MCF 10A (cell line): ENCODE measurements at regions of chr9 and their contacts with region 1.

Region 1: DNA sequence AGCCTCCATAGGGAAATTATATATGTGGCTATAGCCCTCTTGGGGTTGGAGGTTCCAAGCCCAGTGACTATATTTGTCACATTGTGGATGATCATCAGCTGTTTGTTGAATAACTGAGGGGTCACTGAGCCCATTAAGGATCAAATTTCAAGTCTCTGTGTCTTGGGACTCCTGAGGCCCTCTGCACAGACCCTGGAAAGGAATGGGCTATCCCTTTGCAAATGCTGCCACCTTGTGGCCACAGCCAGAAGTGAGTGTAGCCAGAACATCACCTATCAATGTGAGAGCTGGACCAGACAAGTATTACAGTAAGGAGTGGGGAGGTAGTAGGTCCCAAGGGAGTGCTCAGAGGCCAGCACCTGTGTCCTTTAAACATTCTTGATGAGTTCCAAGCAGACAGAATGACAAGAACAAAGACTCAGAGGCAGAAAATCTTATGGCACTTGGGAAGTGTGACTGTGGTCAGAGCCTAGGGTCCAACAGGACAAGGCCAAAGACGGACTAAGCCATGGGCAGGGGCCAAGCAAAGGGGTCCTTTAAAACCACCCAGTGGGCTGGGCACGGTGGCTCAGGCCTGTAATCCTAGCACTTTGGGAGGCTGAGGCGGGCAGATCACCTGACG is 8.2 kb downstream of the RPP25L start:
- DNase-seq: peak; percentile 82
- H3K4me3 Mint-ChIP-seq: no peak overlapping the region
- H3K27ac Mint-ChIP-seq: no peak overlapping the region
- H3K4me1 Mint-ChIP-seq: peaks cover 9% of the 10 kb centered on the region
- H3K27me3 Mint-ChIP-seq: no peaks in the 10 kb centered on the region
- CTCF ChIP-seq: peak; percentile 77

Region 2: GRCh38 chr9:34222451-34222850 is 381.3 kb before region 1 on chr9:
- CTCF ChIA-PET with region 1: no interaction called
- POLR2A ChIA-PET with region 1: no interaction called
- intact Hi-C with region 1: no loop called
- DNase-seq: no peak
- H3K4me3 Mint-ChIP-seq: no peak overlapping the region
- H3K27ac Mint-ChIP-seq: peak overlapping the region; percentile 61
- H3K4me1 Mint-ChIP-seq: peaks cover 13% of the 10 kb centered on the region
- H3K27me3 Mint-ChIP-seq: no peaks in the 10 kb centered on the region
- CTCF ChIP-seq: no peak

Region 3: GRCh38 chr9:34334337-34334824 is 269.3 kb before region 1 on chr9:
- CTCF ChIA-PET with region 1: interaction called, 12 read pairs
- POLR2A ChIA-PET with region 1: interaction called, 3 read pairs
- intact Hi-C with region 1: no loop called
- DNase-seq: no peak
- H3K4me3 Mint-ChIP-seq: no peak overlapping the region
- H3K27ac Mint-ChIP-seq: no peak overlapping the region
- H3K4me1 Mint-ChIP-seq: peaks cover 19% of the 10 kb centered on the region
- H3K27me3 Mint-ChIP-seq: no peaks in the 10 kb centered on the region
- CTCF ChIP-seq: no peak

Region 4: DNA sequence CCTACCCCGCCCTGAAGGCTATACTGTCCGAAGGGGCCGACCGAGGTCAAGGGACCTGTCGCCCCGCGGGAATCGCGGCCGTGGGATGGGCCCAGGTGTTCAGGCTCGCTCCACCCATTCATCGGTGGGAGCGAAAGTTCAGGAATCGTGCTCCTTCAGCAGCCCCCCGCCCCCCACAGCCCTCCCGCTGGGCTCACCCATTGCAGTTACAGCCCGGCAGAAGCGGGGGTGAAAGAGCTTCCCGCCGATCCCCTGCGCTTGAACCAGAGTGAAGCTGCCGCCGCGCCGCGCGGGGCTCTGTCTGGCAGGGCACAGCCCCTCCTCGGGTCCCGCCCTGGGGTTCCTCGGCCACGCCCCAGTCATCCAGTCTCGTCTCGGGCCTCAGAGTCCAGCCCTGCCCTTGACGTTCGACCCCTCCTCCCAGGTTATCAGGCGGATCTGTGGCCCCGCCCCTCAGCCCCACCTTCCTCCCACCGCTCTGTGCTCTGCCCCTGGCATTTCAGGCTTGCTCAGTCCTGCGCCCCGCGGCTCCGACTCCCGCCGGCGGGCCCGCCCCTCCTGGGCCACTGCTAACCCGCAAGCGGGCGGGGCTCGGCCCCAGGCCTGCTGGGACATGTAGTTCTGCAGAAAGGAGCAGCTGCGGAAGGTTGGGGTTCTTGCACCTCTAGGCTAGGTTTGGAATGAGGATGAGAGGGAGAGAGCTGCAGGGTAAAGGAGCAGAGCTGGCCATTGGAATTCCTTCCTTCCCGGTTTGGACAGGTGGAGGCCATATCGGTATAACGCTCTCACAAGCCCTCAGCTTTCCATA is 226.9 kb before region 1 on chr9 and contains the start of gene MYORG:
- CTCF ChIA-PET with region 1: interaction called, 13 read pairs
- POLR2A ChIA-PET with region 1: no interaction called
- intact Hi-C with region 1: no loop called
- DNase-seq: peak; percentile 98
- H3K4me3 Mint-ChIP-seq: peak within 1 kb of the TSS; percentile 72
- H3K27ac Mint-ChIP-seq: peak within 1 kb of the TSS; percentile 68
- H3K4me1 Mint-ChIP-seq: peaks cover 35% of the 10 kb centered on the region
- H3K27me3 Mint-ChIP-seq: no peaks in the 10 kb centered on the region
- CTCF ChIP-seq: no peak
- total RNA-seq, gene MYORG: 2.4 and 2.9 TPM in 2 replicates

Region 5: DNA sequence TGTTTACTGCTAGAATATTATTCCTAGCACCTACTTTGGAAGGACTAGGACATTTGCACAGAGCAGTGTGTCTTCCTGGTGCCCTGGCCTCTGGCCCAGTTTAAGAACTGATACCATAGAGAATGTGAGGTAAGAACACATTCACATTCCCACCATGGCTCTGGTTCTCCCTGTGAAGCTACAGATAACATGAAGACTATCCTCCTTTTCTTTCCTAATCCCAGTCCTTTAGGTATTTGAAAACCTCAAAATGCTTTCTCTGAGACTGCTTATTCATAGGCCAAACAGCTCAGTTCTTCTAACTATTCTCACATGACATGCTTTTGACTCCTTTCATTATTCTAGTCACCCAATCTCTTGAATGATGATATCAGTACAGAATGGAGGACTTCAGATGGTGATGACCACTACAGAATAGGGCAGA is 157.2 kb before region 1 on chr9:
- CTCF ChIA-PET with region 1: interaction called, 10 read pairs
- POLR2A ChIA-PET with region 1: no interaction called
- intact Hi-C with region 1: no loop called
- DNase-seq: no peak
- H3K4me3 Mint-ChIP-seq: no peak overlapping the region
- H3K27ac Mint-ChIP-seq: no peak overlapping the region
- H3K4me1 Mint-ChIP-seq: no peaks in the 10 kb centered on the region
- H3K27me3 Mint-ChIP-seq: no peaks in the 10 kb centered on the region
- CTCF ChIP-seq: no peak

Region 6: GRCh38 chr9:34546834-34547827 is 56.6 kb before region 1 on chr9:
- CTCF ChIA-PET with region 1: interaction called, 16 read pairs
- POLR2A ChIA-PET with region 1: interaction called, 3 read pairs
- intact Hi-C with region 1: loop called (anchors 1 kb)
- DNase-seq: peak; percentile 58
- H3K4me3 Mint-ChIP-seq: no peak overlapping the region
- H3K27ac Mint-ChIP-seq: no peak overlapping the region
- H3K4me1 Mint-ChIP-seq: no peaks in the 10 kb centered on the region
- H3K27me3 Mint-ChIP-seq: peaks cover 16% of the 10 kb centered on the region
- CTCF ChIP-seq: peak; percentile 67

Region 7: DNA sequence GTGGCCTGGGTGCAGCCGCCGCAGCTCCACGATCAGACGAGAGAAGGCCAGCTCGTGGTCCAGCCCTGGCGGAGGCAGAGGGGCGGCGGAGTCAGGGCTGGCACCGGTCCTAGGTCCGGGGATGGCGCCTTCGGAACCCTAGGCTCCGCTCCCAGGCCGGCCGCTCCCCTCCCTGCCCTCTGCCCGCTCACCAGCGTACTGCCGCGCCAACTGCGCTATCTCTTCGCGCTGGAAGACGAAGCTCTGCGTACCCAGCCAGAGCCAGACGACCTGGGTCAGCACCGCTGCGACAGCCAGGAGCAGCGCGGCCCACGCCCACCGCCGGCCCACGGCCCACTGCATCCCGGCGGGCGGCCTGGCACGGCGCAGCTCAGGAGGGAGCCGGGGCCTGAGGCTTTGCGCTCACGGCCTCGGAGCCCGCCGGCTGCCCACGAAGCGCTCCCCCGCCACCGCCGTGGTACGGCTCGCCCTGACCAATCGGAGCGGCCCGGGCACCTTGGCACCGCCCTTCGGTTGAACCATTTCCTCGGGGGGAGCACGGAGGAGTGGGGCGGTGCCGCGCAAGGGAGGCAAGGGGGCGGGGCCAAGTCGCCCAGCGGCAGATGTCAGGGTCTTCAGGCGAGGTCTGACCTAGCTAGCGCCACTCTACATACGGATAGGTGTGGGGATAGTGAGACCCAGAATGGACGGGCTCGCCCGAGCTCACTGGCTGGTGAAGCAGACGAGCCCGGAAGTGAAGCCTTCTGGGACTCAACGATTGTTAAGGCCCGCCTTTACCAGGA is 33.8 kb after region 1 on chr9 and contains the start of gene SIGMAR1:
- CTCF ChIA-PET with region 1: interaction called, 17 read pairs
- POLR2A ChIA-PET with region 1: interaction called, 3 read pairs
- intact Hi-C with region 1: no loop called
- DNase-seq: peak; percentile 93
- H3K4me3 Mint-ChIP-seq: peak within 1 kb of the TSS; percentile 92
- H3K27ac Mint-ChIP-seq: peak within 1 kb of the TSS; percentile 97
- H3K4me1 Mint-ChIP-seq: peaks cover 31% of the 10 kb centered on the region
- H3K27me3 Mint-ChIP-seq: no peaks in the 10 kb centered on the region
- CTCF ChIP-seq: no peak
- total RNA-seq, gene SIGMAR1: 82.1 and 99.8 TPM in 2 replicates

Region 8: DNA sequence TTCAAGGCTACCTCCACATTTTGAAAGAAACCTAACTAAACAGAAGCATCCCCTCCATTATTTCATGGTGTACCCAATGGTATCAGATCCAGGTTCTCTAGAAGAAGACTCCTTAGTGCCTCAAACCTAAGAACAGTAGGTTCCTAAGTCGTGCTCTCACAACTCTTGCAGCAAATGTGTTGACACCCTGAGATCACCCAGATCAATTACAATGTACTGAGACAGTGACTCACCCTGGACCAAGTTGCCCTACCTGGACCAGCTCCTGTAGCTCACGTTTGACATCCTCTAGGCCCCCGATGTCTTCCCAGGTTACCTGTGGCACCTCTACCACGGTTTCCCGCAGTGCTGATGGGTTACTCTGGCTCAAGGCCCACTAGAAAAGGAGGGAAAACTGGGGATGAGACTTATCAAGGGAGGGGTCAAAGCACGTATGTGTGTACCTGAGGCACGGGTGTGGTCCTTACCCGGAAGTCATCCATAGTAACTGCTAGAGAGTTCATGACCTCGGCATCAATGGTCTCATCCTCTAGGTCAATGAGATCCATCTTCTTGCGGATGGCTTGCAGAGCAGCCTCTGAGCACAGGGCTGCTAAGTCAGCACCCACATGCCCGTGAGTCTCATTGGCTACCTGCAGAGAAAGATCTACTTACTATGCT is 457.0 kb after region 1 on chr9:
- CTCF ChIA-PET with region 1: no interaction called
- POLR2A ChIA-PET with region 1: no interaction called
- intact Hi-C with region 1: no loop called
- DNase-seq: no peak
- H3K4me3 Mint-ChIP-seq: no peak overlapping the region
- H3K27ac Mint-ChIP-seq: no peak overlapping the region
- H3K4me1 Mint-ChIP-seq: no peaks in the 10 kb centered on the region
- H3K27me3 Mint-ChIP-seq: no peaks in the 10 kb centered on the region
- CTCF ChIP-seq: no peak

Region 9: DNA sequence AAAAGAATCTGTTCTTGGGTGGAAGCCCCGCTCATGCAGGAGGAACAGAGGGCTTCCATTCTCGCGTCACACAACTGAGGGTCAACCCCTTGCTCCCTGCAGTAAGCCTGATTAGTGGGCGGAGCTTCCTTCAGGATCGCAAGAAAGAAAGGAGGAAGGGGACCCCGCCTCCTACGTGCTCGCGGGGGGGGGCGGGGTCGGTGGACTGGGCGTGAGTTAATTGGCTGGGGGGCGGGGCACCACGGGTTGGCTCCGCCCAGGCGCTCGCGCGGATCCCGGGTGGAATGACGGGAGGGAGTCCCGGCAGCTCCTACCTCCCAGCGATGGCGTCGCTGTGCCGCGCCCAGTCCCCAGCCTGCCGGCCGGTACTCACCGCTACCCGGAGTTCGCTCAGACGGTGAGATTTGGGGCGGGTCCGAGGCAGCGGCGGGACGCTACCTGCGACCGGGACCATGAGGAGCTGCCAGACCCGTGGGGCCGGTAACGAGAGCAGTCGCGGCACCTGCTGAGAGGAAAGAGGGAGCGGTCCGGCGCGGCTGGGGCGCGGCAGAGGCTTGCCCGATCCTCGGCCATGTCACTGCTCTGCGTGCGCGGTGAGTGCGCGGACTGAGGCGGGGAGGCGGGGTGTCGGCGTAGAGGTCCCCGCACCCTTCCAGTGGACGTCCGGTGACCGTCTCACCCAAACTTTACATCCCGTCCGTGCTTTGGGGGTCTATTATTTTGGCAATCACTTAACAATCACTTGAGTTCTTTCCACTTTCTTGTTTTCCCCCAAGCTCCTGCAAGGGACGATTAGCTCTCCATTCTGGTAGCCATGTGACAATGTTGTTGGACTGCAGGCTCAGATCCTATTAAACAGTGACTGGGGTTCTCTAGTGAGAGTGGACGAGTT is 558.2 kb after region 1 on chr9 and contains the start of gene UNC13B:
- CTCF ChIA-PET with region 1: no interaction called
- POLR2A ChIA-PET with region 1: no interaction called
- intact Hi-C with region 1: no loop called
- DNase-seq: peak; percentile 94
- H3K4me3 Mint-ChIP-seq: peak within 1 kb of the TSS; percentile 91
- H3K27ac Mint-ChIP-seq: peak within 1 kb of the TSS; percentile 94
- H3K4me1 Mint-ChIP-seq: peaks cover 18% of the 10 kb centered on the region
- H3K27me3 Mint-ChIP-seq: no peaks in the 10 kb centered on the region
- CTCF ChIP-seq: no peak
- total RNA-seq, gene UNC13B: 20.6 and 22.9 TPM in 2 replicates